ENCODE measurements at regions of chr10 and their contacts with region 1.

Region 1: GRCh38 chr10:3172446-3173170 is at the start of gene PITRM1:
- DNase-seq: peak; percentile 99
- ATAC-seq: peak; percentile 97
- H3K4me3 Mint-ChIP-seq: peak within 1 kb of the TSS; percentile 78
- H3K27ac Mint-ChIP-seq: peak within 1 kb of the TSS; percentile 91
- H3K4me1 Mint-ChIP-seq: peaks cover 23% of the 10 kb centered on the region
- H3K27me3 Mint-ChIP-seq: no peaks in the 10 kb centered on the region
- total RNA-seq, gene PITRM1: 84.8 to 97.9 TPM

Region 2: DNA sequence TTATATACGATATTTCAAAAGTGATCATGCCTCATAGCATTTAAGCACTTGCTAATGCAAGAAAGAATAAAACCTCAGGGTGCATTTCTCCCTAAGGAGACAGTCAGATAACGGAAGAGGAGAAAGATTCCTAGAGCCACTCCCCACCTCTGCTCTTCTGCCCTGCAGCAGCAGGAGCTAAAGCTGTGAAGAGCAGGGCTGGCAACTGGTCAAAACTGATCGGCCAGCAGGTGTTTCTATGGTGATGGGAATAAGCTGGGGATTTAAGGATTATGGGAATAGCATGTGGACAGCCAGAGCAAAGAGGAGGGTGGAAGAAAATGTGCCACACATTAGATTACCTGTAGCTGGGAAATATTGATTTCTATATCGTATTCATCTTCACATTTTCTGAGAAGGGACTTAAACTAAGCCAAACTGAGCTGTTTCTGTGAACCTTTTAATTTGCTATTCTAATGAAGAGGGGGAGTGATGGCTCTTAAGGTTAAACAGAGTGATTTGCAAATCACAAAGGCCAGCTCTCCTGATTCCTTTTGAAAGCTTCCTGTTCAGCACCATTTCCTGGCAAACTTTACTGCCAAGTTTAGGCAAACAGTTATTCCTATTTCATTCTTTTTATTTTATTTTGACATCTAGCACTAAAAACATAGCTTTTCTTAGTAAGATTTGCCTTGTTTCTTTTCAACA is 374.1 kb before region 1 on chr10:
- CTCF ChIA-PET with region 1: no interaction called
- POLR2A ChIA-PET with region 1: no interaction called
- intact Hi-C with region 1: no loop called
- DNase-seq: no peak
- ATAC-seq: no peak
- H3K4me3 Mint-ChIP-seq: no peak overlapping the region
- H3K27ac Mint-ChIP-seq: no peak overlapping the region
- H3K4me1 Mint-ChIP-seq: no peaks in the 10 kb centered on the region
- H3K27me3 Mint-ChIP-seq: peaks cover 17% of the 10 kb centered on the region

Region 3: GRCh38 chr10:3067045-3067858 is 105.4 kb before region 1 on chr10 and contains the start of gene PFKP:
- CTCF ChIA-PET with region 1: interaction called, 3 read pairs
- POLR2A ChIA-PET with region 1: no interaction called
- intact Hi-C with region 1: loop called (anchors 1 to 2 kb)
- DNase-seq: peak; percentile 83
- ATAC-seq: peak; percentile 66
- H3K4me3 Mint-ChIP-seq: peak within 1 kb of the TSS; percentile 83
- H3K27ac Mint-ChIP-seq: peak within 1 kb of the TSS; percentile 89
- H3K4me1 Mint-ChIP-seq: peaks cover 31% of the 10 kb centered on the region
- H3K27me3 Mint-ChIP-seq: peaks cover 5% of the 10 kb centered on the region
- total RNA-seq, gene PFKP: 231 to 239 TPM

Region 4: GRCh38 chr10:3095373-3096139 is 77.1 kb before region 1 on chr10:
- CTCF ChIA-PET with region 1: interaction called, 3 read pairs
- POLR2A ChIA-PET with region 1: interaction called, 3 read pairs
- intact Hi-C with region 1: loop called (anchors 1 kb)
- DNase-seq: peak; percentile 80
- ATAC-seq: peak; percentile 86
- H3K4me3 Mint-ChIP-seq: peak overlapping the region; percentile 15
- H3K27ac Mint-ChIP-seq: peak overlapping the region; percentile 83
- H3K4me1 Mint-ChIP-seq: peaks cover 55% of the 10 kb centered on the region
- H3K27me3 Mint-ChIP-seq: no peaks in the 10 kb centered on the region

Region 5: GRCh38 chr10:3248888-3249758 is 76.5 kb after region 1 on chr10:
- CTCF ChIA-PET with region 1: no interaction called
- POLR2A ChIA-PET with region 1: no interaction called
- intact Hi-C with region 1: no loop called
- DNase-seq: no peak
- ATAC-seq: no peak
- H3K4me3 Mint-ChIP-seq: no peak overlapping the region
- H3K27ac Mint-ChIP-seq: no peak overlapping the region
- H3K4me1 Mint-ChIP-seq: no peaks in the 10 kb centered on the region
- H3K27me3 Mint-ChIP-seq: peaks cover 33% of the 10 kb centered on the region

Region 6: GRCh38 chr10:3312403-3312802 is 139.8 kb after region 1 on chr10:
- CTCF ChIA-PET with region 1: no interaction called
- POLR2A ChIA-PET with region 1: no interaction called
- intact Hi-C with region 1: no loop called
- DNase-seq: no peak
- ATAC-seq: no peak
- H3K4me3 Mint-ChIP-seq: no peak overlapping the region
- H3K27ac Mint-ChIP-seq: no peak overlapping the region
- H3K4me1 Mint-ChIP-seq: peaks cover 6% of the 10 kb centered on the region
- H3K27me3 Mint-ChIP-seq: peaks cover 21% of the 10 kb centered on the region

Region 7: DNA sequence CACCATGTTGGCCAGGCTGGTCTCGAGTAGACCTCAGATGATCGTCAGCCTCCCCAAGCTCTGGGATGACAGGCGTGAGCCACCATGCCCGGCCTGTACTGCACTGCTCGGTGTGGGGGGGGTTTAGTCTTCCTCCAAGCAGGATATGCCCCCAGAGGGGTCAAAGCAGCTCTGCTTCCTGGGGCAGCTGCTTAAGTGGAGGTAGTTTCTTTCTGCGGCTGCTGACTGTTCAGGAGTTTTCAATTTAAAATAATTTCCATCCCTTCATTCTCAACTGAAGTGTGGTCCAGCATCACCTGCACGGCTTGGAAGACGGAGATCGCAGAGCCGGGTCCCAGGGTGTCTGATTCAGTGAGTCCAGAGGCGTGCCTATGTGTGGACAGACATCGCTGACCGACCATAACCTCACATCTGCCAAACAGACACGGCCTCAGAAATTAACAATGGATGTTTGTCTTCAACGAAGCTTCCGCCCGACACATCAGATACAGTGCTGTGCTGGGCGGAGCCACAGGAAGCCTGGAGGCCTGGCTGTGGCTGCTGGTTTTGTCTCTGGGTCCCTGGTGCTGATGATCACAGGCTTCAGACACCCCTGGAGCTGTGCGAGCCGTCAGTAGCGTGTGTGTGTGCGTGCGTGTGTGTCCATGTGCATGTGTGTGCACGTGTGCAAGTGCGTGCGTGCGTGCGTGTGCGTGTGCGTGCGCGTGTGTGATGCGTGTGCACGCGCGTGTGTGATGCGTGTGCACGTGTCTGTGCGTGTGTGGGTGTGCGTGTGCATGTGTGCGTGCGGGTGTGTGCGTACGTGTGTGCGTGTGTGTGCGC is 226.4 kb after region 1 on chr10:
- CTCF ChIA-PET with region 1: no interaction called
- POLR2A ChIA-PET with region 1: no interaction called
- intact Hi-C with region 1: no loop called
- DNase-seq: no peak
- ATAC-seq: no peak
- H3K4me3 Mint-ChIP-seq: no peak overlapping the region
- H3K27ac Mint-ChIP-seq: no peak overlapping the region
- H3K4me1 Mint-ChIP-seq: peaks cover 4% of the 10 kb centered on the region
- H3K27me3 Mint-ChIP-seq: peaks cover 5% of the 10 kb centered on the region

Measured in activated CD4-positive, alpha-beta T cell treated with anti-CD3 and anti-CD28 coated beads for 36 hours (primary cell).